ENCODE measurements at regions of chr16 and their contacts with region 1.

Region 1: GRCh38 chr16:85821441-85822135 is 22.1 kb downstream of the COX4I1 start:
- DNase-seq: peak; percentile 89 to 92
- H3K4me3 ChIP-seq: no peak overlapping the region
- H3K4me3 Mint-ChIP-seq: no peak overlapping the region
- H3K27ac Mint-ChIP-seq: no peak overlapping the region
- H3K4me1 ChIP-seq: peaks cover 3% of the 10 kb centered on the region; the same call in 1 of the 2 replicates
- H3K4me1 Mint-ChIP-seq: peaks cover 7% of the 10 kb centered on the region
- H3K27me3 ChIP-seq: no peaks in the 10 kb centered on the region
- H3K27me3 Mint-ChIP-seq: no peaks in the 10 kb centered on the region
- CTCF ChIP-seq: peak; percentile 95 to 99

Region 2: DNA sequence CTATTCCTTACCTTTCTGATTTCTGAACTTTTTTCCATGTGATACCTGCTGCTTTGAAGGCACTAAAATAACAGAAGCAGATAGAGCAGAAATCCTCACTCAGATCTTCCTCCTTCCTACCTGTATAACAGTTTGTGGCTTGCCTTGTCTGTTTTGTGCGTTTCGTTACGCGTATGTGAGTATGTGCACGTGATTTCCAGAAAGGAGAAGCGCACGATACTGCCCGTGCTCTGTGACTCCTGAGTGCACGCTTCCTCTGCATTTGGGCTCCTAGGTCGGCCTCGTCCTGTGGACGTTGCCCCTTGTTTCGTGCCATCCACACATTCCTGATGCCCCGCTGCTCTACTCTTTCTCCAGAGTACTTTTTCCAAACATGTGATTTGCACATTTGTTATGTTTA is 18.0 kb before region 1 on chr16:
- CTCF ChIA-PET with region 1: no interaction called
- POLR2A ChIA-PET with region 1: no interaction called
- intact Hi-C with region 1: no loop called
- DNase-seq: no peak
- H3K4me3 ChIP-seq: no peak overlapping the region
- H3K4me3 Mint-ChIP-seq: no peak overlapping the region
- H3K27ac Mint-ChIP-seq: no peak overlapping the region
- H3K4me1 ChIP-seq: no peaks in the 10 kb centered on the region
- H3K4me1 Mint-ChIP-seq: no peaks in the 10 kb centered on the region
- H3K27me3 ChIP-seq: no peaks in the 10 kb centered on the region
- H3K27me3 Mint-ChIP-seq: no peaks in the 10 kb centered on the region
- CTCF ChIP-seq: no peak

Region 3: GRCh38 chr16:85851034-85851785 is 29.6 kb after region 1 on chr16:
- CTCF ChIA-PET with region 1: interaction called, 10 read pairs
- POLR2A ChIA-PET with region 1: no interaction called
- intact Hi-C with region 1: loop called (anchors 1 kb)
- DNase-seq: peak in 1 of 2 experiments; percentile 29
- H3K4me3 ChIP-seq: no peak overlapping the region
- H3K4me3 Mint-ChIP-seq: no peak overlapping the region
- H3K27ac Mint-ChIP-seq: peak overlapping the region; percentile 44
- H3K4me1 ChIP-seq: peaks cover 55% of the 10 kb centered on the region
- H3K4me1 Mint-ChIP-seq: peaks cover 61% of the 10 kb centered on the region
- H3K27me3 ChIP-seq: no peaks in the 10 kb centered on the region
- H3K27me3 Mint-ChIP-seq: no peaks in the 10 kb centered on the region
- CTCF ChIP-seq: no peak

Region 4: GRCh38 chr16:85869785-85870558 is 48.4 kb after region 1 on chr16:
- CTCF ChIA-PET with region 1: interaction called, 13 read pairs
- POLR2A ChIA-PET with region 1: no interaction called
- intact Hi-C with region 1: no loop called
- DNase-seq: peak; percentile 78 to 80
- H3K4me3 ChIP-seq: peak overlapping the region; percentile 16; the same call in 1 of the 2 replicates
- H3K4me3 Mint-ChIP-seq: peak overlapping the region; percentile 86
- H3K27ac Mint-ChIP-seq: peak overlapping the region; percentile 99
- H3K4me1 ChIP-seq: peaks cover 13% of the 10 kb centered on the region
- H3K4me1 Mint-ChIP-seq: peaks cover 28% of the 10 kb centered on the region
- H3K27me3 ChIP-seq: no peaks in the 10 kb centered on the region
- H3K27me3 Mint-ChIP-seq: no peaks in the 10 kb centered on the region
- CTCF ChIP-seq: no peak

Region 5: GRCh38 chr16:85940214-85940613 is 118.6 kb after region 1 on chr16:
- CTCF ChIA-PET with region 1: interaction called, 16 read pairs
- POLR2A ChIA-PET with region 1: no interaction called
- intact Hi-C with region 1: no loop called
- DNase-seq: no peak
- H3K4me3 ChIP-seq: no peak overlapping the region
- H3K4me3 Mint-ChIP-seq: no peak overlapping the region
- H3K27ac Mint-ChIP-seq: no peak overlapping the region
- H3K4me1 ChIP-seq: peaks cover 5% of the 10 kb centered on the region; the same call in 1 of the 2 replicates
- H3K4me1 Mint-ChIP-seq: peaks cover 4% of the 10 kb centered on the region
- H3K27me3 ChIP-seq: no peaks in the 10 kb centered on the region
- H3K27me3 Mint-ChIP-seq: no peaks in the 10 kb centered on the region
- CTCF ChIP-seq: no peak

Region 6: GRCh38 chr16:85986931-85987749 is 165.6 kb after region 1 on chr16:
- CTCF ChIA-PET with region 1: interaction called, 147 read pairs
- POLR2A ChIA-PET with region 1: no interaction called
- intact Hi-C with region 1: loop called (anchors 1 kb)
- DNase-seq: peak; percentile 52 to 56
- H3K4me3 ChIP-seq: no peak overlapping the region
- H3K4me3 Mint-ChIP-seq: no peak overlapping the region
- H3K27ac Mint-ChIP-seq: no peak overlapping the region
- H3K4me1 ChIP-seq: peaks cover 29% of the 10 kb centered on the region
- H3K4me1 Mint-ChIP-seq: peaks cover 24% of the 10 kb centered on the region
- H3K27me3 ChIP-seq: no peaks in the 10 kb centered on the region
- H3K27me3 Mint-ChIP-seq: no peaks in the 10 kb centered on the region
- CTCF ChIP-seq: peak; percentile 47 to 87

Region 7: GRCh38 chr16:86072328-86073102 is 250.9 kb after region 1 on chr16:
- CTCF ChIA-PET with region 1: interaction called, 4 read pairs
- POLR2A ChIA-PET with region 1: no interaction called
- intact Hi-C with region 1: loop called (anchors 1 kb)
- DNase-seq: peak; percentile 72 to 78
- H3K4me3 ChIP-seq: no peak overlapping the region
- H3K4me3 Mint-ChIP-seq: no peak overlapping the region
- H3K27ac Mint-ChIP-seq: no peak overlapping the region
- H3K4me1 ChIP-seq: no peaks in the 10 kb centered on the region
- H3K4me1 Mint-ChIP-seq: no peaks in the 10 kb centered on the region
- H3K27me3 ChIP-seq: no peaks in the 10 kb centered on the region
- H3K27me3 Mint-ChIP-seq: no peaks in the 10 kb centered on the region
- CTCF ChIP-seq: peak; percentile 91 to 96

Measured in Caco-2 (cell line).